ENCODE measurements at regions of chr19 and their contacts with region 1.

Region 1: GRCh38 chr19:4909897-4910593 is 744 bp downstream of the UHRF1 start:
- DNase-seq: peak; percentile 98
- ATAC-seq: peak; percentile 83
- H3K4me3 Mint-ChIP-seq: peak overlapping the region; percentile 79
- H3K27ac Mint-ChIP-seq: peak overlapping the region; percentile 84
- H3K4me1 Mint-ChIP-seq: peaks cover 46% of the 10 kb centered on the region
- H3K27me3 Mint-ChIP-seq: no peaks in the 10 kb centered on the region

Region 2: GRCh38 chr19:4851551-4852290 is 58.3 kb before region 1 on chr19:
- CTCF ChIA-PET with region 1: interaction called, 12 read pairs
- POLR2A ChIA-PET with region 1: no interaction called
- DNase-seq: peak; percentile 80
- ATAC-seq: peak; percentile 94
- H3K4me3 Mint-ChIP-seq: no peak overlapping the region
- H3K27ac Mint-ChIP-seq: no peak overlapping the region
- H3K4me1 Mint-ChIP-seq: peaks cover 2% of the 10 kb centered on the region
- H3K27me3 Mint-ChIP-seq: no peaks in the 10 kb centered on the region

Region 3: DNA sequence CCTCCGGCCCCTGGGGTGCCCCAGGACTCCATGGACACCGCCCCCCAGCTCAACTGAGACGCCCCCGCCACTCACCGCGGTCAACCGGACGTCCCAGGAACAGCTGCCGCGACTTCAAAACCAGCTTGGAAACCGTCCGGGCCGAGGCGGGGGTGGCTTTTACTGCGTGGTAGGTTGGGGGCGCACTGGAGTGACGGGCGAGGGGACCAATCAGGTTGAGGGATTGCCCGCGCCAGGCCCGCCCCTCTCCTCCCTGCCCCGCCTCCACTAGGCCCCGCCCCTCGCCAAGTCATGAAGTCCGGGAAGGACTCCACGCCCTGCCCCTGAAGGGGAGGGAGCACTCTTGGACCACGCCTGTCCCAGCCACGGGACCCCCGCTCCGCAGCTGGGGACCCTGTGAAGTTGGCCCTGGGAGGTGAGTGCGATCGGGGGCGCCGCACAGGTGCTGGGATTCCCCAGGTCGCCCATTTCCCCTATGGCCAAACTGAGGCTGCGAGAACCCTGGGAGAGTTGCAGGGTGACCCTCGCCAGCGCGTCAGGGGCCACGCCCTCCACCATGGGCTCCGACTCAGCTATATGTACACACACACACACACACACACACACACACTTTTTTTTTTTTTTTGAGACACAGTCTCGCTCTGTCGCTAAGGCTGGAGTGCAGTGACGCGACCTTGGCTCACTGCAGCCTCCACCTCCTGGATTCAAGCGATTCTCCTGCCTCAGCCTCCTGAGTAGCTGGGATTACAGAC is 42.3 kb before region 1 on chr19 and contains the start of gene PLIN3:
- CTCF ChIA-PET with region 1: interaction called, 165 read pairs
- POLR2A ChIA-PET with region 1: interaction called, 9 read pairs
- DNase-seq: peak; percentile 94
- ATAC-seq: peak; percentile 91
- H3K4me3 Mint-ChIP-seq: peak within 1 kb of the TSS; percentile 79
- H3K27ac Mint-ChIP-seq: peak within 1 kb of the TSS; percentile 68
- H3K4me1 Mint-ChIP-seq: peaks cover 26% of the 10 kb centered on the region
- H3K27me3 Mint-ChIP-seq: peaks cover 2% of the 10 kb centered on the region
- total RNA-seq, gene PLIN3: 27.5 to 32.8 TPM

Measured in activated CD8-positive, alpha-beta T cell treated with anti-CD3 and anti-CD28 coated beads, Interleukin-2, amount 10 ng/mL, durations not matched to agents 7 days and 5 days (primary cell).